ENCODE measurements at regions of chr14 and their contacts with region 1.

Region 1: DNA sequence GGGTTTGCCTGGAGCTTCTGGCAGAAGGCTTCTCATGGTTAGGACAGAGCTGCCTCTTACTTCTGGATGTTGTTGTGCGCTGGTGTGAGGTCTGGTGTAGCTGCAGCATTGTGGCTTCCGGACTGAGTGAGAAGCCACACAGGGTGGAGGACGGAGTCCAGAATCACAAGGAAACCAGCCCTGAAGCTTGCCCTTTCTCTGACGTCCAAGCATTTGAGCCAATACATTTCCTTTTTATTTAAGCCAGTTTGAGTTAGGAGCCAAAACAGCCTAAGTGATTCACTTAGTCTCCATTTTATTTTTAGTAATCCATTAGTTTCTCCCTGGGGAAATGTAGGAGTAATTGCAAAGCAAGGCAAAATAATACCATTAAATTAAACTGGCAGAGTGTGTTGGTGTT is 402.4 kb upstream of the RGS6 start:
- DNase-seq: peak in 1 of 10 donors; percentile 77

Region 2: DNA sequence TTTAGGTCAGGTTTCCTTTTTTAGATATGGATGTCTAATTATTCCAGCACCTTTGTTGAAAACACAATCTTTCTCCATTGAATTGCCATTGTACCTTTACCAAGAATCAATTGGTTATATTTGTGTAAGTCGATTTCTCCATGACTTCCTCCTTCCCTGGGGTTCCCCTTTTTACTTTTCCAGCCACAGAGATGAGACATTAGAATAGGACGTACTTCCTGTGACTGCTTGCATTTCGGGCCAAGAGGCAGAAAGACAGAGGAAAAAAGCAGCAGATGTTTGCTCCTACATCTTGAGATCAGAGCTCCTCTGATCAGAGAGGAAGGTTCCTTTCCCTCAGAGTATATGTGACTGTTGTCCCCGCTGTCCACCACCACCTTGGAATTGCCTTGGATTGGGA is 51.3 kb before region 1 on chr14:
- intact Hi-C with region 1: loop called (anchors 10 kb)
- DNase-seq: no peak

Region 3: DNA sequence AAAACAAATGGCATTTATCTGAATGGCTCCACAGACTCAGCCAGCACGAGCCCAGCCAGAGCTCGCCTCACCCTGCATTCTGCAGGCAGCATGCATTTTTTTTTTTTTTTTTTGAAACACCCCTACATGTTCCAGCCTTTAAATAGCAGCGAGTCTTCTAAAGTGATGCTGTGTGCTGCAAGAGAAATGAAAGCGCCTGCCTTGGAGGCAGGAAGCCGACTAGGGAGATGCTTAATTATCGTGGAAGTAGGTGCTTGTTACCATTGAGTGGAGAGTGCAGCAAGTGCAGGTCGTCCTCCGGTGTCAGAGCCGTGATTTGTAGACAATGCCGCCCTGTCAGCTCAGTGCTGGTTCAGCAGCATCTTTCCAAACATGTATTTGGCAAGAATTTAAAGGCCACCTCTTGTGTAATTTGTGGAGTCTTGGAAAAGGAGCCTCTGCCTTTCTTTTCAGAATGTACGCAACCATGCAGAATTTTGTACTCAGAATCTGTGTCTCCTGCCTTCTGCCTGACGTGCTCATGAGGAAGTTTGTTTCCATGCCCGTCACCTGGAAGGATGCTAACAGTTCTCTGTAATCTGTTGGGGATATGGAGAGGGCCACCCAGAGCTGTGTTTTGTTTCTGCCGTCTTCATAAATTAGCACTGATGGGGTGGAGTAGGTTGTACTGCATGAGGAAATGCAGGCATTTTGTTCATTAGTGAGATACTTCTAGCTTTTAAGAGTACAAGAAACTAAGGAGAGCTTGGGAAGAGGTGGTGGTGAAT is 56.5 kb after region 1 on chr14:
- intact Hi-C with region 1: loop called (anchors 10 kb)
- DNase-seq: peak; percentile 14 to 90 (median 43)

Region 4: DNA sequence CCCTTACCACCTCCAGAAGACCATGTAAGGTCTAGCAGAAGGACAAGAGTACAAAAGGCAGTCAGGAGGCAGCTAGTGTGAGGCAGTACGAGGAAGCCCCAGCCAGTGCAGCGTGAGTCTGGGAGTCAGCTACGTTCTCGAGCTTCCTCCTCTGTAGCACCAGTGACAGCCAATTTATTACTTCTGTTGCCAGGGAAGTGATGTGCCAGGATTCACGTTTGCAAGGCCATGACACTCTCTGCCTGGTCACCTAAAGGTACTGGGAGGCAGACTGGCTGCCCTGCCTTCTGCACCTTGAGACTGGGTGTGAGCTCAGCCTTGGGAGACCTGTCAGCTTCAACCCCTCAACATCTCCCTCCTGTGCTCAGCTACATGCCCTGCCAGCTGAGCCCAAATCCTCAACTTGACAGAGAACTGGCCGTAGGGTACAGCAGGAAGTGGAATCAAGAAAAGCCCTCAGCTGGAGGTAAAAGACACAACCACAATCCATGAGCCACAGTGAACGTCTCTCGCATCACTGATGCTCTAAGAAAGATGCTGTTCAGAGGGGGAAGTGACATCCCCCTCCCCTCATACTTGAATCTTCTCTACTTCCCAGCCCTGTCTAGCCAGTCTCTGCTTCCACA is 219.9 kb after region 1 on chr14:
- intact Hi-C with region 1: no loop called
- DNase-seq: no peak